Activated CD4-positive, alpha-beta T cell treated with anti-CD3 and anti-CD28 coated beads for 36 hours (primary cell): ENCODE measurements at regions of chr7 and their contacts with region 1.

Region 1: GRCh38 chr7:122337011-122337410 is 32.5 kb upstream of the FEZF1 start:
- DNase-seq: no peak
- ATAC-seq: no peak
- H3K4me3 Mint-ChIP-seq: no peak overlapping the region
- H3K27ac Mint-ChIP-seq: no peak overlapping the region
- H3K4me1 Mint-ChIP-seq: no peaks in the 10 kb centered on the region
- H3K27me3 Mint-ChIP-seq: no peaks in the 10 kb centered on the region

Region 2: DNA sequence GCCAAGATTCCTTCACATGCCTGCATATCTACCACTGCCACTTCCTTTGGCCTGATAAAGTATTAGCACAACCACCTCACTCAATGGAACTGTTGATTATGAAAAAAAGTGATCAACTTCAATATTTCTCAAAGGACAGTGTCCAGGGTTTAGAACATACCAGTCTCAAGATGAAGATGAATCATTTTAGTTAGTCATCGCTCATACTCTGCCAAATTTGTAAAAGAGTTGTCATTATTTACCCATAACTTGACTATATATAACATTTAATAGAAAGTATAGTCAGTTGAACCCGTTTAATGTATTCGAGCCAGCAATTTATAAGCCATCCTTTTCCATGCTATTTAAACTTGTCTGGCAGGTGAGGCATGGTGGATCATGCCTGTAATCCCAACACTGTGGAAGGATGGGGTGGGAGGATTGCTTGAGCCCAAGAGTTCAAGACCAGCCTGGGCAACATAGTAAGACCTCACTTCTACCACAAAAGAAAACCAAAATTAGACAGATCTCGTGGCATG is 1621.2 kb after region 1 on chr7:
- CTCF ChIA-PET with region 1: no interaction called
- POLR2A ChIA-PET with region 1: no interaction called
- intact Hi-C with region 1: loop called in 1 of 2 experiments (anchors 10 kb)
- DNase-seq: no peak
- ATAC-seq: no peak
- H3K4me3 Mint-ChIP-seq: no peak overlapping the region
- H3K27ac Mint-ChIP-seq: no peak overlapping the region
- H3K4me1 Mint-ChIP-seq: no peaks in the 10 kb centered on the region
- H3K27me3 Mint-ChIP-seq: peaks cover 2% of the 10 kb centered on the region